ENCODE measurements at regions of chr1 and their contacts with region 1.

Region 1: GRCh38 chr1:145985502-145986439 is 10.6 kb downstream of the TXNIP start:
- DNase-seq: peak; percentile 39
- ATAC-seq: no peak
- H3K4me3 Mint-ChIP-seq: no peak overlapping the region
- H3K27ac Mint-ChIP-seq: peak overlapping the region; percentile 52
- H3K4me1 Mint-ChIP-seq: peaks cover 39% of the 10 kb centered on the region
- H3K27me3 Mint-ChIP-seq: no peaks in the 10 kb centered on the region

Region 2: DNA sequence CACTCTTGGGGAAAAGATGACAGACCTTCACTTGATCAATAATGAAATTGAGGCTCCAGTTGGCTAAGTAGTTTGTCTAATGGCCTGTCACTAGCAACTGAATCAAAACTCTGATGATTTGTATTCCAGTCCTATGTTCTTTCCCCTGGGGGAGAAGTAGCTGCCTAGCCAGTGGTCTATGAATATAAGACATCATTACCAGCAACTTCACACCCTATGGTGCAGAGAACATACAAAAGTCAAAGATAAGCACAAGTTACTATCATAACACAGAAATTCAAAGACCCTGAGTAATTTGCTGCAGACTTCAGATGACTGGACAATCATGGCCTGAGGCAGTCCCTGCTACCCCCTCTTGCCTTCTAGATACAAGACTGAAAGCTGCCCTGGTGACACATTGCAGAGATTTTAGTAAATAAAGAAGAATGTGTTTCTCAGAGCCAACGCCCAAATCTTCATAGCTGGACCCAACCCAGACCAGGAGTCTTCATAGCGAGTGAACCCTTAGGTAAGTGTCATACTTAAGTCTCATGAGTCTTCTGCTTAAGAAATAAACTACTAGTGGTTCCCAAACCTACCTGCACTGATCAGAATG is 279.6 kb before region 1 on chr1:
- CTCF ChIA-PET with region 1: no interaction called
- POLR2A ChIA-PET with region 1: no interaction called
- intact Hi-C with region 1: no loop called
- DNase-seq: no peak
- ATAC-seq: no peak
- H3K4me3 Mint-ChIP-seq: no peak overlapping the region
- H3K27ac Mint-ChIP-seq: no peak overlapping the region
- H3K4me1 Mint-ChIP-seq: no peaks in the 10 kb centered on the region
- H3K27me3 Mint-ChIP-seq: peaks cover 2% of the 10 kb centered on the region

Region 3: GRCh38 chr1:145716641-145717345 is 269.0 kb before region 1 on chr1:
- CTCF ChIA-PET with region 1: no interaction called
- POLR2A ChIA-PET with region 1: no interaction called
- intact Hi-C with region 1: no loop called
- DNase-seq: no peak
- ATAC-seq: no peak
- H3K4me3 Mint-ChIP-seq: no peak overlapping the region
- H3K27ac Mint-ChIP-seq: no peak overlapping the region
- H3K4me1 Mint-ChIP-seq: peaks cover 18% of the 10 kb centered on the region
- H3K27me3 Mint-ChIP-seq: peaks cover 15% of the 10 kb centered on the region

Region 4: GRCh38 chr1:146049436-146049835 is 63.7 kb after region 1 on chr1:
- CTCF ChIA-PET with region 1: no interaction called
- POLR2A ChIA-PET with region 1: interaction called, 37 read pairs
- intact Hi-C with region 1: no loop called
- DNase-seq: no peak
- ATAC-seq: no peak
- H3K4me3 Mint-ChIP-seq: no peak overlapping the region
- H3K27ac Mint-ChIP-seq: no peak overlapping the region
- H3K4me1 Mint-ChIP-seq: peaks cover 26% of the 10 kb centered on the region
- H3K27me3 Mint-ChIP-seq: no peaks in the 10 kb centered on the region

Measured in activated CD4-positive, alpha-beta T cell treated with anti-CD3 and anti-CD28 coated beads for 36 hours (primary cell).